ENCODE measurements at regions of chr9 and their contacts with region 1.

Region 1: GRCh38 chr9:34252670-34253459 is 74.0 kb downstream of the UBAP1 start:
- DNase-seq: peak; percentile 80
- CTCF ChIP-seq: peak; percentile 79

Region 2: GRCh38 chr9:33416996-33417395 is 835.9 kb before region 1 on chr9:
- CTCF ChIA-PET with region 1: no interaction called
- POLR2A ChIA-PET with region 1: no interaction called
- DNase-seq: no peak
- CTCF ChIP-seq: no peak

Region 3: GRCh38 chr9:34227445-34227844 is 25.4 kb before region 1 on chr9:
- CTCF ChIA-PET with region 1: interaction called, 30 read pairs
- POLR2A ChIA-PET with region 1: no interaction called
- DNase-seq: no peak
- CTCF ChIP-seq: no peak

Region 4: DNA sequence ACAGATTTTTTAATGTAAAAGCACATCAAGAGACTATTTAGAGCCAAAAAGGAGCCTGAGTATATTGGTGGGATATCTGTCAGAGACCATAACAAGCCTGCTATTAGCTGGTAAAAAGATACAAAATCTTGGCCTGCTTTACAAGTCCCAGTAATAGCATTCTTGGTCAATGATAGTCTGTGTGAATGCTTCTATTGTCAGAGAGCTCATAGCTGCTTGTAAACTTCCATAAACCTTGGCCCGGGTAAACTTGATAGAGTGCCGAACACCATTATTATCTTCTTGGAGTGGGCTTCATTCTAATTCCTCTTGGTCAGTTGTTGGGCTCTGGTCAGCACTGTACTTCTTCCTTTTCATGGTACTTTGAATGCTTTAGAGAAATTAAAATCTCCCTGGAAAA is 10.0 kb before region 1 on chr9:
- CTCF ChIA-PET with region 1: interaction called, 62 read pairs
- POLR2A ChIA-PET with region 1: no interaction called
- DNase-seq: no peak
- CTCF ChIP-seq: no peak

Region 5: DNA sequence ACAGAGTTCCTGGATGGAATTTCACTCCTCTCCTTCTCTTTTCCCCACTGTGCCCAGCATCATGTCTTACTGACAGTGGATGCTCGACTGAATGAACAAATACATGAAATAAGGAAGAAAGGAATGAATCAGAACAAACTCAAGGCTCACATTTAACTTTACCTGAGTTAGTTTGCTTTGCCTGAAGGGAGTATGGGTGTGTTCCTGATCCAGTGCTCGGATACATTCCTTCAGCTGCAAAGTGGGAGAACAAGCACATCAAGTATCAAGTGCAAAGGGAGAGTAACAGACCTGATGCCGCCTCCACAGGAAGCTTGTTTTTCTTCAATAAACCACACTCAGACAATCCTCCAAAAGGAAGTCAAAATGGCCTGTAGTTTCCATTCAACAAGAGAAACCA is 10.1 kb after region 1 on chr9:
- CTCF ChIA-PET with region 1: interaction called, 63 read pairs
- POLR2A ChIA-PET with region 1: no interaction called
- DNase-seq: no peak
- CTCF ChIP-seq: no peak

Region 6: DNA sequence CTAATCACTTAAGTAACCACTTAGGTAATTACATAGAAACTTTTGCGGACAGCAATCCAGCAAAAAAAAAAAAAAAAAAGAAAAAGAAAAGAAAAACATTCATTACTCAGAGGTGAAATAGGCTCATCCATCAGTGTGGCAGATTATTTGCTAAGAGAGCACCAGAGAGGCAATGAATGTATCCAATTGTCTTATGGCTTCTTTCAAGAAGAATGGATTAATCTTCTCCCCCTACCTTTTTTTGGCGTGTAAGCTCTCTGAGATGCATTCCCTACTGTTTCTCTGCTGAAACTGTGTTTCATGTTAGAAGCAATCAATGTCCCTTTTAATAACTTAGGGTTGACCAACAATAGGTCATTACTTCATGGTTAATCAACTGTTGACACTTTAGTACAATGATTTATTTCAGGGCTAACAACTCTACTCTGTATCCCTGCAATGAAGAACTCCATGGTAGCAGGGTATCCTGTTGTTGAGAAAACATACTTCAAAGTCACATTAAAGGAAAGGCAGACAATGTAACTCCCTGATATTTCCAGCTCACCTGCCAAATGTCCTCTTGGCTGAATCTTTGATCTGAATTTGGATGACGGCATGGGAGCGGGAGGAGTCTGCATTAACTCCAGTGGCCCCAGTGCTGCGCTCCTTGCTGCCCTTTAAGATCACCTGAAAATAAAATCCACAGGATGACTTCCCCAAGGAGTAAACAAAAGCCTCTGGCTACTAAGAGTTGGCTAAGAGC is 18.6 kb after region 1 on chr9:
- CTCF ChIA-PET with region 1: interaction called, 63 read pairs
- POLR2A ChIA-PET with region 1: interaction called, 4 read pairs
- DNase-seq: no peak
- CTCF ChIP-seq: no peak

Region 7: GRCh38 chr9:34369636-34370035 is 116.8 kb after region 1 on chr9:
- CTCF ChIA-PET with region 1: no interaction called
- POLR2A ChIA-PET with region 1: no interaction called
- DNase-seq: no peak
- CTCF ChIP-seq: no peak